ENCODE measurements at regions of chr14 and their contacts with region 1.

Region 1: GRCh38 chr14:105368965-105369652 is 29.2 kb upstream of the TEX22 start:
- DNase-seq: no peak
- H3K4me3 ChIP-seq: no peak overlapping the region
- H3K27ac ChIP-seq: no peak overlapping the region
- H3K4me1 ChIP-seq: no peaks in the 10 kb centered on the region
- H3K27me3 ChIP-seq: no peaks in the 10 kb centered on the region
- CTCF ChIP-seq: no peak
- POLR2A ChIP-seq: no peak

Region 2: DNA sequence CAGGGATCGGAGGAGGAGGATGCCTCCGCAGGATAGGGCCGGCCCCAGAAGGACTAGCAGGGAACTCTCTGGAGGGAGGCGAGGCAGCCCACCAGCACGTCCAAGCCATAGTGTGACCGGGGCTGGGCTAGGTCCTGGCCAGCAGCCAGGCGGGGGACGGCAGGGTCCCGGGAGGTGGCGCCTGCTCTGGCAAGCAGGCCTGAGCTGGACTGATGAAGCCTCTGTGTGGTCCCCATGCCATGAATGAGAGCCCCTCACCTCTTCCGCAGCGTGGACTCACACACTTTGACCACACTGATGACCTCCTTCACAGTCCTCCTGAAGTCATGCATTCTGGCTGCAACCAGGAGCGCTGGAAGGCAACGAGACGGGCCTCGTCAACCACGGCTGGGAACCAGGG is 140.5 kb before region 1 on chr14:
- CTCF ChIA-PET with region 1: no interaction called
- POLR2A ChIA-PET with region 1: no interaction called
- dilution Hi-C with region 1: no loop called
- intact Hi-C with region 1: no loop called
- DNase-seq: no peak
- H3K4me3 ChIP-seq: no peak overlapping the region
- H3K27ac ChIP-seq: no peak overlapping the region
- H3K4me1 ChIP-seq: no peaks in the 10 kb centered on the region
- H3K27me3 ChIP-seq: no peaks in the 10 kb centered on the region
- CTCF ChIP-seq: no peak
- POLR2A ChIP-seq: no peak

Region 3: DNA sequence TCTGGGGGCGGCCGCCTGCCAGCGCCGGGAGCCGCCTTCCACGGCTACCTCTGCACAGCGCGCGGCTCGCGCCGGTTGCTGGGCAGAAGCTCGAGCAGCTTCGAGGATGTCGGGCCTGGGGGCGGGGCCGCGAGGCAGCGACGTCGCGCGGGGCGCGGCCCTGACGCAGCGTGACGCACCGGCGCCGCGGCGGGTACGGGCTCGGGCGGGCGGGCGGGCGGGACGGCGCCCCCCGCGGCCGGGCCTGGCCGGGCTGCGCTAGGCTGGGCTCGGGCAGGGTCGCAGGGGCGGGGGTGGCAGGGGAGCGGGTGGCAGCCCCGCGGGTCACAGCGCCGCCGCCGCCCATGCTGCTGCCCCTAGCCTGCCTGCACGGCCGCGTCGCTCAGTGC is 120.7 kb before region 1 on chr14 and contains the start of gene BTBD6:
- CTCF ChIA-PET with region 1: no interaction called
- POLR2A ChIA-PET with region 1: no interaction called
- dilution Hi-C with region 1: no loop called
- intact Hi-C with region 1: no loop called
- DNase-seq: peak; percentile 84
- H3K4me3 ChIP-seq: peak within 1 kb of the TSS; percentile 45 to 80 (median 52)
- H3K27ac ChIP-seq: peak within 1 kb of the TSS; percentile 74
- H3K4me1 ChIP-seq: peaks cover 7% of the 10 kb centered on the region
- H3K27me3 ChIP-seq: no peaks in the 10 kb centered on the region
- CTCF ChIP-seq: no peak
- POLR2A ChIP-seq: peak; percentile 73
- total RNA-seq, gene BTBD6: 57.7 and 63.1 TPM in 2 replicates

Region 4: GRCh38 chr14:105439691-105440553 is 70.8 kb after region 1 on chr14:
- CTCF ChIA-PET with region 1: interaction called, 17 read pairs
- POLR2A ChIA-PET with region 1: no interaction called
- dilution Hi-C with region 1: no loop called
- intact Hi-C with region 1: no loop called
- DNase-seq: peak; percentile 19
- H3K4me3 ChIP-seq: no peak overlapping the region
- H3K27ac ChIP-seq: no peak overlapping the region
- H3K4me1 ChIP-seq: peaks cover 16% of the 10 kb centered on the region
- H3K27me3 ChIP-seq: no peaks in the 10 kb centered on the region
- CTCF ChIP-seq: no peak
- POLR2A ChIP-seq: no peak

Region 5: DNA sequence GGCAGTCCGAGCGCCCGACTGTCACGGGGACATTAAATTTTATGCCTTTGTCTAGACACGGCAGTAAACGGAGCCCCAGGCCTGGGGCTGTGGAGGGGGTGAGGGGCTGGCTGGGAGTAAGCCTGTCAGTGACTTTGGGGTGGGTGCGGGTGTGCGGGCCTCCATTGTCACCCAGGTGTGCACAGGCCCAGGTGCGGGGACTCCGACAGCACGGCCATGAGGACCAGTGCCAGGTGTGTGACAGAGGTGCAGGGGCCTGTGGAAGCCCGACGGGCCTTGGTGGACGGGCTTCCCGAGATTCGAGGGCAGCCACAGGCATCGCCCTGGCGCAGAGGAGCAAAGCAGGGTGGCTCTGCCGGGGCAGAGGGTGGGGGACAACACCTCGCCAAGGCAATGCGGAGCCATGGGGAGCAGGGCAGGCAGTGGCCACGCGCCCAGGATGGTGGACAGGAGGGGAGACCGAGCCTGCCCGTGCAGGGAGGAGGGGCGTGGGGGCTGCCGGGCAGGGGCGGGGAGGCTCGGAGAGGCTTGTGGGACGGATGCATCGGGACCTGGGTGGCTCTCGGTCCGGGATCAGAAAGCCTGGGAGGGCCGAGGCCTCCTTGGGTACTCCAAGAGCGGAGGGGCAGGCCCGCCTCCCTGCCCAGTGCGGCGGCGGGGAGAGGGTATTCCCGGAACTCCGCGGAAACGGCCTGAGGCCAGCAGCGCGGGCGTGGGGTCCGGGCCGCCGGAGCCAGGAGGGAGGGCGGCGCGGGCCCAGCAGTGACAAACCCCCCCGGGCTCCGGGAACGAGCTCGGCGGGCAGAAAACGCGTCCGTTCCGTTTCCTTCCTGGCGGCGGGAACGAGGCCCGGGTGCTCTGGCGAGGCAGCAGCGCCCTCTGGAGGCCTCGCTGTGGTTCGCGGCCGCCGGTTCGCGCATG is 158.8 kb after region 1 on chr14:
- CTCF ChIA-PET with region 1: interaction called, 35 read pairs
- POLR2A ChIA-PET with region 1: no interaction called
- dilution Hi-C with region 1: no loop called
- intact Hi-C with region 1: loop called (anchors 1 kb)
- DNase-seq: peak; percentile 61
- H3K4me3 ChIP-seq: peak overlapping the region; percentile 26 to 63 (median 49)
- H3K27ac ChIP-seq: no peak overlapping the region
- H3K4me1 ChIP-seq: peaks cover 17% of the 10 kb centered on the region
- H3K27me3 ChIP-seq: peaks cover 6 to 7% of the 10 kb centered on the region in 2 experiments
- CTCF ChIP-seq: peak; percentile 68 to 91
- POLR2A ChIP-seq: peak; percentile 46